ENCODE measurements at regions of chr6 and their contacts with region 1.

Region 1: GRCh38 chr6:29847871-29848630 is 20.4 kb downstream of the HLA-G start:
- DNase-seq: peak; percentile 75 to 92 (median 84)
- ATAC-seq: peak; percentile 89
- H3K4me3 ChIP-seq: no peak overlapping the region
- H3K4me3 Mint-ChIP-seq: no peak overlapping the region
- H3K27ac ChIP-seq: no peak overlapping the region
- H3K27ac Mint-ChIP-seq: no peak overlapping the region
- H3K4me1 ChIP-seq: peaks cover 15% of the 10 kb centered on the region
- H3K4me1 Mint-ChIP-seq: peaks cover 14% of the 10 kb centered on the region
- H3K27me3 ChIP-seq: peaks cover 29 to 54% of the 10 kb centered on the region in 2 experiments
- H3K27me3 Mint-ChIP-seq: peaks cover 72% of the 10 kb centered on the region
- CTCF ChIP-seq: peak; percentile 97

Region 2: DNA sequence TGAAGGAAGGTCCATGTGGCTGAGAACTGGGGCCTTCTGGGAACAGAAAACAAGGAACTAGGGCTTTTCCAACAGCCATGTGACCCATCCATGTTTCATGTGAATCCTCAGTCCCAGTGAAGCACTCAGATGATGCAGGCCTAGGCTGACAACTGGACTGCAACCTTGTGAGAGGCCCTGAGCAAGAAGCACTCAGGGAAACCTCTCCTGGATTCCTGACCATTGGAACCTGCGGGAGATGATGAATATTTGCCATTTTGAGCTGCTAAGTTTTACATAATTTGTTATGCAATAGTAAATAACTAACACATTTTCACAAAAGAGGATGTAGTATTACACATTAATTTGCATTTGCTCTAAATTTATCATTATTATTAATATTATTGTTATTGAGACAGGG is 58.9 kb before region 1 on chr6:
- CTCF ChIA-PET with region 1: no interaction called
- POLR2A ChIA-PET with region 1: no interaction called
- intact Hi-C with region 1: no loop called
- DNase-seq: no peak
- ATAC-seq: no peak
- H3K4me3 ChIP-seq: no peak overlapping the region
- H3K4me3 Mint-ChIP-seq: no peak overlapping the region
- H3K27ac ChIP-seq: no peak overlapping the region
- H3K27ac Mint-ChIP-seq: no peak overlapping the region
- H3K4me1 ChIP-seq: peaks cover 22% of the 10 kb centered on the region
- H3K4me1 Mint-ChIP-seq: peaks cover 25% of the 10 kb centered on the region
- H3K27me3 ChIP-seq: peaks cover 0 to 4% of the 10 kb centered on the region in 2 experiments
- H3K27me3 Mint-ChIP-seq: peaks cover 39% of the 10 kb centered on the region
- CTCF ChIP-seq: no peak

Region 3: GRCh38 chr6:29909985-29910384 is 61.9 kb after region 1 on chr6:
- CTCF ChIA-PET with region 1: no interaction called
- POLR2A ChIA-PET with region 1: no interaction called
- intact Hi-C with region 1: loop called in 1 of 2 experiments (anchors 10 kb)
- DNase-seq: no peak
- ATAC-seq: no peak
- H3K4me3 ChIP-seq: no peak overlapping the region
- H3K4me3 Mint-ChIP-seq: no peak overlapping the region
- H3K27ac ChIP-seq: no peak overlapping the region
- H3K27ac Mint-ChIP-seq: no peak overlapping the region
- H3K4me1 ChIP-seq: peaks cover 4% of the 10 kb centered on the region
- H3K4me1 Mint-ChIP-seq: no peaks in the 10 kb centered on the region
- H3K27me3 ChIP-seq: no peaks in the 10 kb centered on the region
- H3K27me3 Mint-ChIP-seq: peaks cover 29% of the 10 kb centered on the region
- CTCF ChIP-seq: no peak

Region 4: GRCh38 chr6:29976588-29977424 is 128.8 kb after region 1 on chr6:
- CTCF ChIA-PET with region 1: interaction called, 4 read pairs
- POLR2A ChIA-PET with region 1: interaction called, 5 read pairs
- intact Hi-C with region 1: loop called in 1 of 2 experiments (anchors 1 kb)
- DNase-seq: peak in 12 of 14 experiments; percentile 26 to 82 (median 54)
- ATAC-seq: peak; percentile 79
- H3K4me3 ChIP-seq: peak overlapping the region; percentile 62
- H3K4me3 Mint-ChIP-seq: peak overlapping the region; percentile 91
- H3K27ac ChIP-seq: no peak overlapping the region
- H3K27ac Mint-ChIP-seq: no peak overlapping the region
- H3K4me1 ChIP-seq: peaks cover 38% of the 10 kb centered on the region
- H3K4me1 Mint-ChIP-seq: peaks cover 36% of the 10 kb centered on the region
- H3K27me3 ChIP-seq: peaks cover 33 to 36% of the 10 kb centered on the region in 2 experiments
- H3K27me3 Mint-ChIP-seq: peaks cover 59% of the 10 kb centered on the region
- CTCF ChIP-seq: peak; percentile 27

Region 5: DNA sequence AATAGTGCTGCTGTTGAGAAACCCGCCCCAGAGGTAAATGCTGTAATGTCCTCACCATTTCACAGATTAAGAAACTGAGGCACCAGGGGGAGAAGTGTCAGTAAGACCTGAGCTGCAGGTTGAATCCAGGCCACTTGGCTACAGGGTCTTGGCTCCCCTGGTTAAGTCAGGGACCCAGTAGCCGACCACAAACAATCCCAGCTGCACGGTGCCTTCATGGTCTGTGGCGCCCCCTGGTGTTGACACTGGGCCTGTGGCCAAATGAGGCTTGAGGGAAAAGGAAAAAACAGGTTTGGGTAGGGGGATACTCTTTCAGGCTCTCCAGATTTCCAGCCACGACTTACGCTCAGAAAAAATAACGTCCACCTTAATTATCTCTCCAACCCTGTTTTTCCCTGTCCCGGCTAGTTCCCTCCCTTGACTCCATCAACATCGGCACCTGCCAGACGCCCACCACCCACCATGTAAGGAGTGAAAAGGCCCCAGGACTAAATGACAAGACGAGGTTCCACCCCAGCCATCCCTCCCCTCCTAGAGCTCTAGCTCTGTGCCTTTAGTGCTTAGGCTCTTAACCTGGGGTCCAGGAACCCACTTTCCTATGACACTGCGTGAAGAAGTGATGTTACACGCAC is 165.4 kb after region 1 on chr6:
- CTCF ChIA-PET with region 1: interaction called, 35 read pairs
- POLR2A ChIA-PET with region 1: no interaction called
- intact Hi-C with region 1: loop called (anchors 1 kb)
- DNase-seq: peak in 9 of 14 experiments; percentile 3 to 71 (median 46)
- ATAC-seq: peak; percentile 56
- H3K4me3 ChIP-seq: no peak overlapping the region
- H3K4me3 Mint-ChIP-seq: no peak overlapping the region
- H3K27ac ChIP-seq: no peak overlapping the region
- H3K27ac Mint-ChIP-seq: no peak overlapping the region
- H3K4me1 ChIP-seq: no peaks in the 10 kb centered on the region
- H3K4me1 Mint-ChIP-seq: no peaks in the 10 kb centered on the region
- H3K27me3 ChIP-seq: peaks cover 11 to 16% of the 10 kb centered on the region in 2 experiments
- H3K27me3 Mint-ChIP-seq: peaks cover 30% of the 10 kb centered on the region
- CTCF ChIP-seq: peak; percentile 77

Region 6: GRCh38 chr6:30130887-30131862 is 283.1 kb after region 1 on chr6:
- CTCF ChIA-PET with region 1: interaction called, 3 read pairs
- POLR2A ChIA-PET with region 1: no interaction called
- intact Hi-C with region 1: loop called (anchors 2 kb)
- DNase-seq: peak; percentile 45 to 92 (median 60)
- ATAC-seq: peak; percentile 98
- H3K4me3 ChIP-seq: no peak overlapping the region
- H3K4me3 Mint-ChIP-seq: no peak overlapping the region
- H3K27ac ChIP-seq: no peak overlapping the region
- H3K27ac Mint-ChIP-seq: no peak overlapping the region
- H3K4me1 ChIP-seq: peaks cover 13% of the 10 kb centered on the region
- H3K4me1 Mint-ChIP-seq: peaks cover 5% of the 10 kb centered on the region
- H3K27me3 ChIP-seq: peaks cover 37 to 58% of the 10 kb centered on the region in 2 experiments
- H3K27me3 Mint-ChIP-seq: peaks cover 71% of the 10 kb centered on the region
- CTCF ChIP-seq: peak; percentile 100

Region 7: DNA sequence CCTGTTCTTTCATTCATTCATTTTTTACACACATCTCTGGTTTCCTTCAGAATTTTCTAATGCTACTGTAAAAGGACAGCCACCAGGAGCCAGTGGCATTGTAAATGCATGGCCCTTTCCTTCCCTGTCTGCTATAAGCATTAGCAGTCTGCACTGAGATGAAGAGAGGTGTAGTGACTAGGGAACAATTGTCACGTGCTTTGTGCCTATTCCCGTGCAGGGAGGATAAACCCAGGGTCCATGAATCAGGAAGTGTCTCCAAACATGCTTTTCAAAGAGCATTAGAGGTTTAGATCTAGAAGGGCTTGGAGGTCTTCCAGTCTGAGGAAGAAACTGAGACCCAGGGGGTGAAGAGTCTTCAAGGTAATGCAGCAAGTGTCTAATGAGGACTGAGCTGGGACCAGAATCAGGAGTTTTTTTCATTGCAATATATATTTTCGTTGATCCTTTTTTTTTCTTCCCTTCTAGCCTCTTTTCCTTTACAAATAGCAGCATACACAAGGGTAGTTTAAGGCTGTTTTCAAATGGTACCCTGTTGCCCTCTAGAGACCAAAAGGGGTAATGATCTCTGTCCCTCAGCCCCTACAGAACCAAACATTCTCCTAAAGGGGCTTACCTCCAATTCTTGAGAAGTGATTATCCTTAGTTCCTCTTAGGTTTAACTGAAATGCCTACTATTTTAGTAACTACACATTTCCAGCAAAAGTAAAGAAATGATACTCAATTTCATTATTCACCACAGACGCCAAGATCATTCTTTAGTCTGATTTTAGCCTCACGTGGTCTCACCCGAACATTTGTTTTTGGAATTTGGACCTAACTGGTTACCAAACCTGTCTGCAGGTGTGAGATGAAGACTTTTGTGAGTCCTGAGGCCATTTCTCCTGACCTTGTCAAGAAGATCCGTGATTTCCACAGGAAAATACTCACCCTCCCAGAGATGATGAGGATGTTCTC is 321.9 kb after region 1 on chr6:
- CTCF ChIA-PET with region 1: no interaction called
- POLR2A ChIA-PET with region 1: no interaction called
- intact Hi-C with region 1: loop called in 1 of 2 experiments (anchors 2 kb)
- DNase-seq: peak in 4 of 14 experiments; percentile 11 to 67 (median 58)
- ATAC-seq: peak; percentile 81
- H3K4me3 ChIP-seq: no peak overlapping the region
- H3K4me3 Mint-ChIP-seq: no peak overlapping the region
- H3K27ac ChIP-seq: no peak overlapping the region
- H3K27ac Mint-ChIP-seq: no peak overlapping the region
- H3K4me1 ChIP-seq: peaks cover 16% of the 10 kb centered on the region
- H3K4me1 Mint-ChIP-seq: no peaks in the 10 kb centered on the region
- H3K27me3 ChIP-seq: peaks cover 32 to 48% of the 10 kb centered on the region in 2 experiments
- H3K27me3 Mint-ChIP-seq: peaks cover 62% of the 10 kb centered on the region
- CTCF ChIP-seq: peak; percentile 78

Region 8: GRCh38 chr6:31689249-31690110 is 1841.4 kb after region 1 on chr6:
- CTCF ChIA-PET with region 1: no interaction called
- POLR2A ChIA-PET with region 1: no interaction called
- intact Hi-C with region 1: no loop called
- DNase-seq: peak in 3 of 14 experiments; percentile 11 to 41 (median 31)
- ATAC-seq: no peak
- H3K4me3 ChIP-seq: no peak overlapping the region
- H3K4me3 Mint-ChIP-seq: no peak overlapping the region
- H3K27ac ChIP-seq: no peak overlapping the region
- H3K27ac Mint-ChIP-seq: no peak overlapping the region
- H3K4me1 ChIP-seq: no peaks in the 10 kb centered on the region
- H3K4me1 Mint-ChIP-seq: no peaks in the 10 kb centered on the region
- H3K27me3 ChIP-seq: no peaks in the 10 kb centered on the region
- H3K27me3 Mint-ChIP-seq: no peaks in the 10 kb centered on the region
- CTCF ChIP-seq: peak; percentile 19